CD8-positive, alpha-beta T cell (primary cell): ENCODE measurements at regions of chr1 and their contacts with region 1.

Region 1: GRCh38 chr1:185360714-185361113 is 43.7 kb upstream of the IVNS1ABP start:
- DNase-seq: no peak
- ATAC-seq: no peak
- H3K4me3 ChIP-seq: no peak overlapping the region
- H3K4me3 Mint-ChIP-seq: no peak overlapping the region
- H3K27ac ChIP-seq: no peak overlapping the region
- H3K27ac Mint-ChIP-seq: no peak overlapping the region
- H3K4me1 ChIP-seq: no peaks in the 10 kb centered on the region
- H3K4me1 Mint-ChIP-seq: no peaks in the 10 kb centered on the region
- H3K27me3 ChIP-seq: no peaks in the 10 kb centered on the region
- H3K27me3 Mint-ChIP-seq: no peaks in the 10 kb centered on the region
- CTCF ChIP-seq: no peak

Region 2: DNA sequence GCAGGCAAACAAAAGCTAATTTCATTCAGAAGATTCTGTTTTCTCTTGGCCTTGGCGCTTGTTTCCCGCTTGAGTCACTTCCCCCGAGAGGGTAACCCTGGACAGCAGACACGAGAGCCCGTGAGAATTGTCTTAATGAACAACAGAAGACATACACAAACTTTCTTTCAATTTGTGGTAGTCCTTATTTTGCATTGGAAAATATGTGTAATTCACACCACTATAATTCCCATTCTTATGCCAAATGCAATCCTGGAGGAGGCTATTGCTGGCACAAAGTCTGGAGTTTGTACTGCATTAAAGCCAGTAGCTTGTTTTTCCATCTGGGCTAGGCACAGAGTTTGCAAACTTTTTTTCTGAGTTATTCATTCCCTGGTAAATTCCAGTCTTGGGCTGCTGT is 66.1 kb after region 1 on chr1:
- CTCF ChIA-PET with region 1: no interaction called
- POLR2A ChIA-PET with region 1: no interaction called
- intact Hi-C with region 1: loop called in 1 of 2 experiments (anchors 5 kb)
- DNase-seq: no peak
- ATAC-seq: no peak
- H3K4me3 ChIP-seq: no peak overlapping the region
- H3K4me3 Mint-ChIP-seq: no peak overlapping the region
- H3K27ac ChIP-seq: no peak overlapping the region
- H3K27ac Mint-ChIP-seq: no peak overlapping the region
- H3K4me1 ChIP-seq: no peaks in the 10 kb centered on the region
- H3K4me1 Mint-ChIP-seq: peaks cover under 1% of the 10 kb centered on the region
- H3K27me3 ChIP-seq: no peaks in the 10 kb centered on the region
- H3K27me3 Mint-ChIP-seq: no peaks in the 10 kb centered on the region
- CTCF ChIP-seq: no peak